CD4-positive, alpha-beta memory T cell (primary cell): ENCODE measurements at regions of chr7 and their contacts with region 1.

Region 1: DNA sequence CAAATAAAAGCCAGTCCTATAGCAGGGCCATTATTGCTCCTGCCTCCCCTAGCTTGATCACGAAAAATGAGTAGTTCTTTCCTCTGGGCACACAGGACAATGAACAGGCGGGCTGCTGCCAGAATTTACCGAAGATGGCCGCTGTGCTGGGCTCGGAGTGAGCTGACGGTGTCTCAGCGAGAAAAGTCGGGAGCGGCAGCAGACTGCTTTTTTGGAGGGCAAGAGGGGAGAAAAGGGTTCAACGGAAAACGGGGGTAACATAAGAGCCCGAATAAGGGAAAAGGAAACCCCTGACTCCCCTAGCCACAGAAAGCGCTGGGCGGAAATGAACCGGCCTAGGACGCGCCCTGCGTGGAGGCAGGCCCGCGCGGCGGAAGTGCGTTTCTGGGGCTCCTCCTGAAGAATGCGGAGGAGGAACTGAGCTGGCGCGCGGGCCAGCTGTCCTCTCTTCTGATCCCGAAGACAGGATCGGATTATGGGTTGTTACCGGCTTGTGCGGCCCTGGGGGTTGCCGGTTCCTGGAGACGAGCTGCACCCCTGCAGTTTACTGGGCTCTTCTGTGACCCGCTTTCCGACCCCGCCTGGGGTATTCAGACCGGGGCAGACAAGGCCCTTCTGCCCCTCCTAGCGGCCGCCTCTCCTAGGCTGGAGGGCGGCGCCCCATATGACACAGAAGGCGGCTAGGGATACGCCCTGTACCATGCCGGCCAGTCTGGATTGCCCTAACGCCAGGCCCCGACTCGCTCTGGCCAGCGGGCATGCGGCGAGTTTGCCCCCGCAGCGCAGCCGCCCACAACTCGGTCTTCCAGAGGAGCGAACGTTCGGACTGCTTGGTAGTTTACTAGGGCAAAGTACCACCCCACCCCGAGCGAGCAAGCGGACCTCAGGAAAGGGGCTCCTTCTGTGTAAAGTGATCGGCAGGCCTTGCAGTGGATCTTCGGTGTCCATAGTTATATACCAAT is 30.1 kb upstream of the KMT2E start:
- DNase-seq: peak; percentile 84 to 91 (median 86)
- H3K4me3 ChIP-seq: peak overlapping the region; percentile 47 to 92
- H3K4me3 Mint-ChIP-seq: peak overlapping the region; percentile 97 to 100 (median 100)
- H3K27ac ChIP-seq: peak overlapping the region; percentile 98
- H3K27ac Mint-ChIP-seq: peak overlapping the region in 6 of 7 donors; percentile 99 to 100 (median 100)
- H3K4me1 ChIP-seq: peaks cover 37% of the 10 kb centered on the region
- H3K4me1 Mint-ChIP-seq: peaks cover 33 to 63% (median 42%) of the 10 kb centered on the region in 4 donors
- H3K27me3 ChIP-seq: no peaks in the 10 kb centered on the region
- H3K27me3 Mint-ChIP-seq: no peaks in the 10 kb centered on the region

Region 2: DNA sequence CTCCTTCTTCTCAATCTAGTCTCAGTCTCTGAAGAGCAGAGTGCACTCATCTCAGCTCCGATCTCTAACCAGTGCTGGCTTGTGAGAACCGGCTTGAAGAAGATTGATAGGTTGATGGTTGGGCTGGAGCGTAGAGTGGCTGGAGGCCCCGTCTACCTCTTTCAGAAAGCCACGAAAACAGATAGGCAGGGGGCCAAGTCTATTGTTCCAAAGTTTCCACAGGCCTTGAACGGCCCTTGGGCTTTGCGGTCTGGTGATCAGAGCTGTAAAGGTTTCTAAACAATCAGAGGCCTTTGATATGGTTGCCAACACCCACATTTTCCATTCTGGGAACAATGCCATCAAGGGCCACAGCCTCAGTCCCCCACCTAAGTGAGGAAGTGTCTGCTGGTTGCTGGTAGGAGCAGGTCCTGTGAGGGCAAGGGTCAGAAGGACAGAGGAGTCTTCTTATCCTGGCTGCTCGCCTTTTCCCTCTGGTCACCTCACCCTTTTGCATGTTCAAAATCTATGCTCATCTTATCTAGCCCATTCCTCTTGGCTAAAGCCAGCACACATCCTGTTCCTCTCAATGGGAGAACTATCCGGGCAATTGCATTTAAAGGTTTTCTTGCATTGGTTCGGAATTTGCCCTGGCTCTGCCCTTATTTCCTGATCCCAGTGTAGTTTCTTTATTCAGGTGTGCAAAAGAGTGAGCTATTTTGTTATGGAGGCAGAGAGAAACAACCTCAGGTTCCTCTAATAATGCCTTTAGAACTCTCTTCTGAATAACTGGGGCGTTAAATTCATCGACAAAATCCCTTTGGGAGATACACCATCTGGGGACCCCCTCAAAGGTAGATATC is 40.1 kb before region 1 on chr7:
- CTCF ChIA-PET with region 1: interaction called, 23 read pairs
- POLR2A ChIA-PET with region 1: interaction called, 51 read pairs
- intact Hi-C with region 1: loop called (anchors 1 kb)
- DNase-seq: peak; percentile 75 to 92 (median 81)
- H3K4me3 ChIP-seq: peak overlapping the region; percentile 1 to 15
- H3K4me3 Mint-ChIP-seq: peak overlapping the region; percentile 82 to 92 (median 88)
- H3K27ac ChIP-seq: peak overlapping the region; percentile 94
- H3K27ac Mint-ChIP-seq: peak overlapping the region; percentile 100
- H3K4me1 ChIP-seq: peaks cover 59% of the 10 kb centered on the region
- H3K4me1 Mint-ChIP-seq: peaks cover 45 to 71% (median 58%) of the 10 kb centered on the region in 4 donors
- H3K27me3 ChIP-seq: no peaks in the 10 kb centered on the region
- H3K27me3 Mint-ChIP-seq: peaks cover 0 to 1% of the 10 kb centered on the region in 2 donors

Region 3: DNA sequence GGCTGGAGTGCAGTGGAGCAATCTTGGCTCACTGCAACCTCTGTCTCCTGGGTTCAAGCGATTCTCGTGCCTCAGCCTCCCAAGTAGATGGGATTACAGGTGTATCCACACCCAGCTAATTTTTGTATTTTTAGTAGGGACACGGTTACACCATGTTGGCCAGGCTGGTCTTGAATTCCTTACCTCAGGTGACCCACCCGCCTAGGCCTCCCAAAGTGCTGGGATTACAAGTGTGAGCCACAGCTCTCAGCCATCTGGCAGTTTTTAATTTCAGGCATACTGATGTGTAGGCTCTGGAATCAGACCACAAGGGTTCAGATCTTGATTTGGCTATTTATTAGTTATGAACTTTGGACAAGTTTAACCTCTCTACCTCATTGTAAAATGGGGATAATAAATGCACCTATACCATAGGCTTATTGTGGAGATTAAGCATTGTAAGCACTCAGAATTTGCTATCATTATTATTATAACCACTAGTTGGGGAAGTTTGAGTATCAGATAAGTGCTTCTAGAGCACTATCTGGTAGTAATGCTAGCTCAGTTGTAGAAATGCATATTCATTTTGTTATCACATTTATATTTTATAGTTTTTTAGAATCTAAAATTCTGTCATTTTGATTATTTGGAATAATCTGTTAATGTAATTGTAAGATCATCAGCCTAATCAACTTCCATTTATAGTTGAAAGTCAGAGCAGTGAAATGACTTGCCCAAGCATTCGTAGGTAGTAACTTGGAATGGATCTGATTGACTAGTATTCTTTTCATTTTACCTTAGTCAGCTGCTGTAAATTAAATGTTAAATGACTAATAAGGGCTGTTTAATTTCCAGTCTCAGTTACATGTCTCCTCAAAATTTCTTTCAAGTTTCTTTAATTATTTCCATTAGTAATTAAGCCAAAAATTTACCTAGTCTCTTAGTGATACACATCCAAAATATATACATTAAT is 52.6 kb after region 1 on chr7:
- CTCF ChIA-PET with region 1: interaction called, 93 read pairs
- POLR2A ChIA-PET with region 1: interaction called, 44 read pairs
- intact Hi-C with region 1: loop called (anchors 1 kb)
- DNase-seq: no peak
- H3K4me3 ChIP-seq: no peak overlapping the region
- H3K4me3 Mint-ChIP-seq: peak overlapping the region in 6 of 8 donors; percentile 29 to 66 (median 63)
- H3K27ac ChIP-seq: no peak overlapping the region
- H3K27ac Mint-ChIP-seq: peak overlapping the region in 6 of 7 donors; percentile 36 to 81 (median 49)
- H3K4me1 ChIP-seq: peaks cover 79% of the 10 kb centered on the region
- H3K4me1 Mint-ChIP-seq: peaks cover 44 to 74% (median 59%) of the 10 kb centered on the region in 4 donors
- H3K27me3 ChIP-seq: no peaks in the 10 kb centered on the region
- H3K27me3 Mint-ChIP-seq: no peaks in the 10 kb centered on the region

Region 4: GRCh38 chr7:105067691-105068090 is 83.8 kb after region 1 on chr7:
- CTCF ChIA-PET with region 1: interaction called, 14 read pairs
- POLR2A ChIA-PET with region 1: interaction called, 5 read pairs
- intact Hi-C with region 1: no loop called
- DNase-seq: no peak
- H3K4me3 ChIP-seq: no peak overlapping the region
- H3K4me3 Mint-ChIP-seq: no peak overlapping the region
- H3K27ac ChIP-seq: no peak overlapping the region
- H3K27ac Mint-ChIP-seq: peak overlapping the region in 4 of 7 donors; percentile 32 to 72 (median 52)
- H3K4me1 ChIP-seq: peaks cover 14% of the 10 kb centered on the region
- H3K4me1 Mint-ChIP-seq: peaks cover 14 to 31% (median 25%) of the 10 kb centered on the region in 4 donors
- H3K27me3 ChIP-seq: no peaks in the 10 kb centered on the region
- H3K27me3 Mint-ChIP-seq: no peaks in the 10 kb centered on the region

Region 5: GRCh38 chr7:105118612-105119600 is 135.0 kb after region 1 on chr7:
- CTCF ChIA-PET with region 1: interaction called, 11 read pairs
- POLR2A ChIA-PET with region 1: interaction called, 3 read pairs
- intact Hi-C with region 1: no loop called
- DNase-seq: no peak
- H3K4me3 ChIP-seq: no peak overlapping the region
- H3K4me3 Mint-ChIP-seq: no peak overlapping the region
- H3K27ac ChIP-seq: no peak overlapping the region
- H3K27ac Mint-ChIP-seq: peak overlapping the region; percentile 24 to 80 (median 42)
- H3K4me1 ChIP-seq: peaks cover 4% of the 10 kb centered on the region
- H3K4me1 Mint-ChIP-seq: peaks cover 12 to 31% (median 14%) of the 10 kb centered on the region in 4 donors
- H3K27me3 ChIP-seq: no peaks in the 10 kb centered on the region
- H3K27me3 Mint-ChIP-seq: no peaks in the 10 kb centered on the region

Region 6: DNA sequence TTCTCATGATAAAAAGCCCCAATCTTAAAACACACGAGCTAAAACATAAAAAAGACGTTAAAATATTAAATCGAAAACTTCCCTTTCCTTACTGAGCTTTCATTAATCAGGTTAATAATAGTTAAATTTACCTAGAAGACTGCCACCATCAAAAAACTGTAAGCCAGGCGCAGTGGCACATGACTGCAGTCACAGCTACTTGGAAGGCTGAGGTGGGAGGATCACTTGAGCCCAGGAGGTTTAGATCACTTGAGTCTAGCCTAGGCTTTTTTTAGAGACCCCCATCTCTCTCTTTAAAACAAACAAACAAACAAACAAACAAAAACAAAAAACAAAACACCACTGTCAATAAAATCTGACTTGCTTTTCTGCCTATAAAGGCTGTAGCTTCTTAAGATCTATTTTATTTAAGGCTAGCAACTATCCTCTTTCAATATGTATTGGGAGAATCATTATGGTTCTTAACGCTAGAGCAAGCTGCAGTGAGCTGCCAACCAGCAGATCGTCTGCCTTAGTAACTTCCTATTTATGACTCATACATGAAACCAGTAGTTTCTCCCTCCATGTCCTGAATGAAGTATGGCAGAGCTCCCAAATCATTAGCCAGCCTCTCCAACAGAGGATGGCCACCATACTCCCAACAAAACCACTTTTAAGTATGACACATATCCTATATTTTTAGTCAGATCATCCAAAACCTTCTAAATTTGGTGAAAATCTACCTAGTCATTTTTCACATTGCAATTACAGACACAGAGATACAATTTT is 241.2 kb after region 1 on chr7:
- CTCF ChIA-PET with region 1: no interaction called
- POLR2A ChIA-PET with region 1: no interaction called
- intact Hi-C with region 1: no loop called
- DNase-seq: no peak
- H3K4me3 ChIP-seq: no peak overlapping the region
- H3K4me3 Mint-ChIP-seq: peak overlapping the region in 2 of 8 donors; percentile 31 to 47
- H3K27ac ChIP-seq: no peak overlapping the region
- H3K27ac Mint-ChIP-seq: peak overlapping the region in 4 of 7 donors; percentile 3 to 70 (median 50)
- H3K4me1 ChIP-seq: peaks cover 11% of the 10 kb centered on the region
- H3K4me1 Mint-ChIP-seq: peaks cover 29 to 38% (median 34%) of the 10 kb centered on the region in 4 donors
- H3K27me3 ChIP-seq: no peaks in the 10 kb centered on the region
- H3K27me3 Mint-ChIP-seq: no peaks in the 10 kb centered on the region

Region 7: DNA sequence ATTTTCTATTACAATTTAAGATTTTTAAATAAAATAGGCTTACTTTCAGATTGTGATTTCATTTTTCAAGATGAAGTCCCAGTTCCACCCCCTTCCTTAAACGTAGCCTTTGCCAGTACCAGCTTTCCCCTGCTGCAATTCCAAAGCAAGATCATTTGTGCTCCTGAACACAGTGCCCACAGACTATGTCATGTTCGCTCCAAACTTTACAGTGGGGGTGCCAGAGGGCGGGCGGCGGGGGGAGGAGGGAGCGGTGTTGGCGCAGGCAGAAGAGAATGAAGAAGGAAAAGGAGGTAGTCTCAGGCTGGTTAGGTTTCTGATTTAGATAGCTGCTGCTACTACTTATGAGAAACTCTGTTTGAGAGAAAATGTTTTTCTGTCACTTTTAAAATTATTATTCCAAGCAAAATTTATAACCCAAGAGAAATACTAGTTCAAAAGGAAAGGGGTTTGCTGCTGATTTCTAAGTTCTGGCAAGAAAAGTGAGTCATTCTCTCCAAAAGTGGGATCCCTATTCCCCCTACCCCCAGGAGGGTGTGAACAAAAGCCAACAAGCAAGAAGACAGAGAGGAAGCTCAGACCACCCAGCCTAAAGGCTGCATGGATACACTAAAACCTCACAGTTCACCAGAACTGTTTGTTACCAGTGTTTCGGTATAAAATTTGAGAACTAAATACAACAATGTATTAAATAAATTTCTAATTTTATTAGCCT is 295.3 kb after region 1 on chr7:
- CTCF ChIA-PET with region 1: no interaction called
- POLR2A ChIA-PET with region 1: no interaction called
- intact Hi-C with region 1: no loop called
- DNase-seq: no peak
- H3K4me3 ChIP-seq: no peak overlapping the region
- H3K4me3 Mint-ChIP-seq: no peak overlapping the region
- H3K27ac ChIP-seq: no peak overlapping the region
- H3K27ac Mint-ChIP-seq: peak overlapping the region in 1 of 7 donors; percentile 29
- H3K4me1 ChIP-seq: no peaks in the 10 kb centered on the region
- H3K4me1 Mint-ChIP-seq: peaks cover 15 to 29% (median 21%) of the 10 kb centered on the region in 4 donors
- H3K27me3 ChIP-seq: no peaks in the 10 kb centered on the region
- H3K27me3 Mint-ChIP-seq: no peaks in the 10 kb centered on the region

Region 8: DNA sequence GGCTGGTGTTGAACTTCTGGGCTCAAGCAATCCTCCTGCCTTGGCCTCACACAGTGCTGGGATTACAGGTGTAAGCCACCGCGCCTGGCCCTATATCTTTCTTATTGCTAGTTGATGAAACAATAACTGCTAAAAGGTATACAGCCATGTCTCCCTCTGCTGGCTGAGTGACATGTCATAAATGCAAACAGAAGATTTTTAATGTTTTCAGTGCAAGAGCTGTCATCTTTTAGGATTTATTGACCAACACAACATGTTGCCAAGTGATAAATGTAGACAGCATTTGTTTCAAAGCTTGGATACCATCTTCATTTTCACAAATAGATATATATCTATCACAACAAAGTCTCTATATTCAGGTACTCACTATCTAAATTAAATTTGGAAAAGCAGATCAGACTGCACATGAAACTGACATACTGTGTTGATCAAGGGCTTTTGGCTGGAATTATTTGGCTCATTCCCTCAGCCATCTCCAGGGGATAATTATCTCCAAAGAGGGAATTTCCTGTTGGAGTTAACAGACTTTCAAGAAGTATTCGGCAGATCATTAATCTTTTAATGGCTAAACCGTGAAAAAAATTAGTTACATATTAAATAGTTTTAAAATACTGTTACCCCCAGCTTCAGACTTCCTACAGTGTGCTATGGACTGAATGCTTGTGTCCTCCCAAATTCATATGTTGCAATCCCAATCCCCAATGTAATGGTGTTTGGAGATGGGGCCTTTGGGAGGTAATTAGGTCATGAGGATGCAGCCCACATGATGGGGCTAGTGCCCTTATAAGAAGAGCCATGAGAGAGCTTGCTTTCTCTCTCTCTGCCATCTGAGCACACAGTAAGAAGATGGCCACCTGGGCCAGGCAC is 446.1 kb after region 1 on chr7:
- CTCF ChIA-PET with region 1: interaction called, 12 read pairs
- POLR2A ChIA-PET with region 1: interaction called, 3 read pairs
- intact Hi-C with region 1: loop called (anchors 1 kb)
- DNase-seq: peak; percentile 49 to 58 (median 56)
- H3K4me3 ChIP-seq: no peak overlapping the region
- H3K4me3 Mint-ChIP-seq: no peak overlapping the region
- H3K27ac ChIP-seq: no peak overlapping the region
- H3K27ac Mint-ChIP-seq: peak overlapping the region in 2 of 7 donors; percentile 22 to 46
- H3K4me1 ChIP-seq: peaks cover 5% of the 10 kb centered on the region
- H3K4me1 Mint-ChIP-seq: peaks cover 3 to 8% (median 4%) of the 10 kb centered on the region in 4 donors
- H3K27me3 ChIP-seq: no peaks in the 10 kb centered on the region
- H3K27me3 Mint-ChIP-seq: no peaks in the 10 kb centered on the region

Region 9: GRCh38 chr7:105589356-105590077 is 605.7 kb after region 1 on chr7:
- CTCF ChIA-PET with region 1: interaction called, 4 read pairs
- POLR2A ChIA-PET with region 1: no interaction called
- intact Hi-C with region 1: loop called (anchors 5 kb)
- DNase-seq: peak; percentile 47 to 59 (median 53)
- H3K4me3 ChIP-seq: no peak overlapping the region
- H3K4me3 Mint-ChIP-seq: peak overlapping the region in 1 of 8 donors; percentile 42
- H3K27ac ChIP-seq: no peak overlapping the region
- H3K27ac Mint-ChIP-seq: peak overlapping the region in 4 of 7 donors; percentile 14 to 78 (median 54)
- H3K4me1 ChIP-seq: peaks cover 4% of the 10 kb centered on the region
- H3K4me1 Mint-ChIP-seq: peaks cover 4 to 6% (median 5%) of the 10 kb centered on the region in 4 donors
- H3K27me3 ChIP-seq: no peaks in the 10 kb centered on the region
- H3K27me3 Mint-ChIP-seq: no peaks in the 10 kb centered on the region